ENCODE measurements at regions of chr7 and their contacts with region 1.

Region 1: GRCh38 chr7:54758702-54759592 is at the start of gene SEC61G:
- DNase-seq: peak; percentile 96 to 98 (median 98)
- ATAC-seq: peak; percentile 98 to 99 (median 99)
- H3K4me3 ChIP-seq: peak within 1 kb of the TSS; percentile 82 to 100 (median 94)
- H3K27ac ChIP-seq: peak within 1 kb of the TSS; percentile 68 to 95 (median 88)
- H3K4me1 ChIP-seq: peaks cover 0 to 38% (median 26%) of the 10 kb centered on the region in 12 donors
- H3K27me3 ChIP-seq: no peaks in the 10 kb centered on the region
- CTCF ChIP-seq: no peak
- POLR2A ChIP-seq: peak; percentile 35 to 86
- total RNA-seq, gene SEC61G: 65.7 to 200 (median 84.2) TPM

Region 2: DNA sequence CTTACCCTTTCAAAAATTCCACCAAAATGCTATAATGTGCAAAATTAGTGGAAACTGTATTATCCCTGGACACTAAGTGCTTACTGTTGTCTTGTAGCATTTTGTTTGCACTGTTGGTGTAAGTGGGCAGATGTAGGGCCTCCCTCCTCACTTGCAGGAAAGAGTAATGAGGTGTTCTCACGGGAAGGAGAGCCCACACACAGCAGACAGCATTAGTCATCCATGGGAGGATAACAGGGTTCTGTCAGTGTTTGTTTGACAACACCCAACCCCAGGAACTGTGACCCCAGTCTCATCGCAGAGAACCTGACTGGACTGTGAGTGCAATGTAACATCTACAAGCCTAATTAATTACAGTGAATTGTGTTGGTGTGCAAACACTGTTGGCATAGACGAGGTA is 275.4 kb before region 1 on chr7:
- intact Hi-C with region 1: no loop called
- DNase-seq: no peak
- ATAC-seq: no peak
- H3K4me3 ChIP-seq: no peak overlapping the region
- H3K27ac ChIP-seq: no peak overlapping the region
- H3K4me1 ChIP-seq: no peaks in the 10 kb centered on the region
- H3K27me3 ChIP-seq: no peaks in the 10 kb centered on the region
- CTCF ChIP-seq: no peak
- POLR2A ChIP-seq: no peak

Region 3: DNA sequence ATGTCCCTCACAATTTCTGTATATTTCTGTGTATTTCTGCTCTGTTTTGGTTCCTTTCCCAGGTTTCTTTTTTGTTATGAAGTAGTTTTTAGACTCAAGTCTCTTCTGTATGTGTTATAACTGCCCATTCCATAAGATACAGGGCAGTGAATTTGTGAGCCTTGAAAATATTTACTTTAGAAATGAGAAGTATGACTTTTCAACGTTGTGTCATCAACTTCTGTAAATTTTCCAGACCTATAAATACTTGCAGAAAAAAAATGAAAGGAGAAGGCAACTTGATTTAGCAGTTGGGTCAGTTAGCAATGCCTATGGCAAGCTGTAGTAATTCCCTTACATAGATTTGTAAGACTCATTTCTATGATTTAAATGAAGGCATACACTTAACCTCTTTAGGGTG is 271.4 kb after region 1 on chr7:
- intact Hi-C with region 1: no loop called
- DNase-seq: no peak
- ATAC-seq: no peak
- H3K4me3 ChIP-seq: no peak overlapping the region
- H3K27ac ChIP-seq: peak overlapping the region in 1 of 12 donors; percentile 33
- H3K4me1 ChIP-seq: peaks cover 0 to 46% (median 5%) of the 10 kb centered on the region in 12 donors
- H3K27me3 ChIP-seq: no peaks in the 10 kb centered on the region
- CTCF ChIP-seq: no peak
- POLR2A ChIP-seq: no peak

Region 4: DNA sequence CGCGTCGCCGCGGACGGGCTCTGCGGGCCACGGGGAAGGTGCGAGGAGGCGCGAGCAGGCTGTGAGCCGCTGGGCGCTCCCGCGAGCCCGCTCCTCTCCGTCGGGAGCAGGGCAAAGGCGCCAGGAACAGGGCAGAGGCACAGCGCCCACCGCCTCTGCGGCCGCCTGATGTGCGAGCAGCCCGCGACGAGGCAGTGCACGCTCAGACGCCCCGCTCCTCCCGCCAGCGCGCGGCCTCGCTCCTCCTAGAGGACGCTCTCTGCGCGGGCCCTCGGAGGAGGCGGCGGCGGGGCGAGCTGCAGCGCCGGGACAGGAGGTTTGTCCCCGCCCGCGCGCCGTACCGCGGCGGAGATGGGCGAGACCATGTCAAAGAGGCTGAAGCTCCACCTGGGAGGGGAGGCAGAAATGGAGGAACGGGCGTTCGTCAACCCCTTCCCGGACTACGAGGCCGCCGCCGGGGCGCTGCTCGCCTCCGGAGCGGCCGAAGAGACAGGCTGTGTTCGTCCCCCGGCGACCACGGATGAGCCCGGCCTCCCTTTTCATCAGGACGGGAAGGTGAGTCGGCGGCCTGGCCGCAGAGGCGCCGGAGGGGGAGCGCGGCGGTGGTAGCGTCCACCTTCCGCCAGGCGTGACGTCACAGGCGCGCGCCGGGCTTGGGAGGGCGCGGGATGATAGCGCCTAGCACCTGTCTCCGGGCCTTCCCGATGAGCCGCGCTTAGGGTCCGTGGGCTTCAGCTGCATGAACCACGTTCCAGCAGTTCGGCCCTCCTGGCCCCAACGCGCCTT is 606.9 kb after region 1 on chr7:
- intact Hi-C with region 1: loop called in 1 of 10 experiments (anchors 5 kb)
- DNase-seq: peak; percentile 96 to 98 (median 97)
- ATAC-seq: peak; percentile 97 to 99 (median 99)
- H3K4me3 ChIP-seq: peak overlapping the region; percentile 73 to 100 (median 96)
- H3K27ac ChIP-seq: peak overlapping the region; percentile 95 to 100 (median 100)
- H3K4me1 ChIP-seq: peaks cover 0 to 21% (median 15%) of the 10 kb centered on the region in 12 donors
- H3K27me3 ChIP-seq: no peaks in the 10 kb centered on the region
- CTCF ChIP-seq: peak in 10 of 12 donors; percentile 5 to 52 (median 26)
- POLR2A ChIP-seq: peak in 1 of 2 donors; percentile 65

Region 5: DNA sequence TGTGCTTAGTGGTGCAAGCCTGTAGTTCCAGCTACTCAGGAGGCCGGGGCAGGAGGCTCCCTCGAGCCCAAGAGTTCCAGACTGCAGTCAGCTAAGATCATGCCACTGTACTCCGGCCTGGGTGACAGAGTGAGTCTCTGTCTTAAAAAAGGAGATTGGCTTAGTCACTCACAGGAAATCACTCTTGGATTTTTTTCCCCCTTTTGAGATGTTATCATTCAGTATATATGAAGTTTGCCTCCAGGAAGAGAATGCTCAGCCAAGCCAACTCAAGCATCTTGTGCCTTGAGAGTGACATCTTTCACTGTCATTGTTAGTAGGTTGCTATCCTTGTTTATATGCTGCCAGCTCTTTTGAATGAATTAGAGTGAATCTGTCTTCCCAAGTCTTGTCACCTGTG is 1233.4 kb after region 1 on chr7:
- intact Hi-C with region 1: loop called in 1 of 10 experiments (anchors 10 kb)
- DNase-seq: no peak
- ATAC-seq: no peak
- H3K4me3 ChIP-seq: no peak overlapping the region
- H3K27ac ChIP-seq: no peak overlapping the region
- H3K4me1 ChIP-seq: no peaks in the 10 kb centered on the region
- H3K27me3 ChIP-seq: no peaks in the 10 kb centered on the region
- CTCF ChIP-seq: no peak
- POLR2A ChIP-seq: no peak